CD8-positive, alpha-beta T cell (primary cell): ENCODE measurements at regions of chr17 and their contacts with region 1.

Region 1: GRCh38 chr17:6843241-6843880 is 11.8 kb upstream of the TEKT1 start:
- DNase-seq: peak in 2 of 9 experiments; percentile 56 to 69
- ATAC-seq: no peak
- H3K4me3 ChIP-seq: no peak overlapping the region
- H3K4me3 Mint-ChIP-seq: no peak overlapping the region
- H3K27ac ChIP-seq: no peak overlapping the region
- H3K27ac Mint-ChIP-seq: no peak overlapping the region
- H3K4me1 ChIP-seq: no peaks in the 10 kb centered on the region
- H3K4me1 Mint-ChIP-seq: peaks cover 3% of the 10 kb centered on the region
- H3K27me3 ChIP-seq: peaks cover 0 to 3% of the 10 kb centered on the region in 2 experiments
- H3K27me3 Mint-ChIP-seq: peaks cover 26% of the 10 kb centered on the region
- CTCF ChIP-seq: peak; percentile 66

Region 2: GRCh38 chr17:6666077-6666521 is 177.3 kb before region 1 on chr17:
- CTCF ChIA-PET with region 1: interaction called, 10 read pairs
- POLR2A ChIA-PET with region 1: no interaction called
- intact Hi-C with region 1: loop called in 1 of 2 experiments (anchors 1 kb)
- DNase-seq: peak in 6 of 9 experiments; percentile 16 to 69 (median 50)
- ATAC-seq: peak; percentile 65
- H3K4me3 ChIP-seq: no peak overlapping the region
- H3K4me3 Mint-ChIP-seq: no peak overlapping the region
- H3K27ac ChIP-seq: no peak overlapping the region
- H3K27ac Mint-ChIP-seq: no peak overlapping the region
- H3K4me1 ChIP-seq: no peaks in the 10 kb centered on the region
- H3K4me1 Mint-ChIP-seq: peaks cover 15% of the 10 kb centered on the region
- H3K27me3 ChIP-seq: peaks cover 0 to 2% of the 10 kb centered on the region in 2 experiments
- H3K27me3 Mint-ChIP-seq: no peaks in the 10 kb centered on the region
- CTCF ChIP-seq: peak; percentile 77

Region 3: DNA sequence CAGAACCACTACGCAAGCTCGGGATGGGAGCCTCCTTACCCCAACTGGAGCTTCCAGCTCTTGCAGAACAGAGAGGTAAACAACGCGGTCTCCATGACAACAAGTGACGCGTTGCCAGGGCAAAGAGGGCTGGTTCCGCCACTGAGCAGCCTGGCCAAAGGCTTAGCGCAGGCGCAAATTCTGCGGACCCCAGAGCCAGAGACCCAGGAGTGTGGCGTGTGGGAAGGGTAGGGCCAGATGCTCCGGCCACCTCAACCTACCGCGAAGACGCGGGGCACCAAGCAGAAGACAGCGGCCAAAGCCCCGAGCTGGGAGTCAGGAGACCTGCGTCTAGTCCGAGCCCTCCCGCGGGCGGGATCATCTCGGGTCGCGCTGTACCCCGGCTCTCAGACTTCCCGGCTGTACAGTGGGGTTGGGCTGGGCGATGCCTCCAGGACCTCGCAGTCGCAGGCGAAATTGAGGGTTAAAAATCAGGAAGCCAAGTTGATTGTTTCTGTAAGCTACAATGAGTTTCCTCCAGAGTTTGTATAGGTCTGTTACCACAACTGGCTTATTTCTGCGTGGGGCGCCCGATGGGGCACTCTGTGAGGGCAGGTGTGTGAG is 11.6 kb before region 1 on chr17 and contains the start of gene TEKT1:
- CTCF ChIA-PET with region 1: interaction called, 15 read pairs
- POLR2A ChIA-PET with region 1: no interaction called
- intact Hi-C with region 1: no loop called
- DNase-seq: peak; percentile 50 to 88 (median 74)
- ATAC-seq: peak; percentile 92
- H3K4me3 ChIP-seq: peak within 1 kb of the TSS; percentile 30 to 49
- H3K4me3 Mint-ChIP-seq: peak within 1 kb of the TSS; percentile 82
- H3K27ac ChIP-seq: peak within 1 kb of the TSS in 1 of 2 experiments; percentile 31
- H3K27ac Mint-ChIP-seq: no peak within 1 kb of the TSS
- H3K4me1 ChIP-seq: peaks cover 12% of the 10 kb centered on the region
- H3K4me1 Mint-ChIP-seq: peaks cover 9% of the 10 kb centered on the region
- H3K27me3 ChIP-seq: peaks cover 23 to 31% of the 10 kb centered on the region in 2 experiments
- H3K27me3 Mint-ChIP-seq: peaks cover 52% of the 10 kb centered on the region
- CTCF ChIP-seq: no peak
- total RNA-seq, gene TEKT1: not detected

Region 4: GRCh38 chr17:7004398-7005253 is 161.3 kb after region 1 on chr17:
- CTCF ChIA-PET with region 1: interaction called, 24 read pairs
- POLR2A ChIA-PET with region 1: no interaction called
- intact Hi-C with region 1: loop called (anchors 1 to 5 kb)
- DNase-seq: peak in 3 of 9 experiments; percentile 47 to 85 (median 77)
- ATAC-seq: peak; percentile 98
- H3K4me3 ChIP-seq: no peak overlapping the region
- H3K4me3 Mint-ChIP-seq: no peak overlapping the region
- H3K27ac ChIP-seq: no peak overlapping the region
- H3K27ac Mint-ChIP-seq: no peak overlapping the region
- H3K4me1 ChIP-seq: no peaks in the 10 kb centered on the region
- H3K4me1 Mint-ChIP-seq: peaks cover 23% of the 10 kb centered on the region
- H3K27me3 ChIP-seq: no peaks in the 10 kb centered on the region
- H3K27me3 Mint-ChIP-seq: no peaks in the 10 kb centered on the region
- CTCF ChIP-seq: peak; percentile 78

Region 5: GRCh38 chr17:7136266-7136877 is 293.0 kb after region 1 on chr17:
- CTCF ChIA-PET with region 1: interaction called, 3 read pairs
- POLR2A ChIA-PET with region 1: no interaction called
- intact Hi-C with region 1: loop called (anchors 5 to 10 kb)
- DNase-seq: peak; percentile 56 to 88 (median 82)
- ATAC-seq: no peak
- H3K4me3 ChIP-seq: no peak overlapping the region
- H3K4me3 Mint-ChIP-seq: no peak overlapping the region
- H3K27ac ChIP-seq: no peak overlapping the region
- H3K27ac Mint-ChIP-seq: no peak overlapping the region
- H3K4me1 ChIP-seq: peaks cover 6% of the 10 kb centered on the region
- H3K4me1 Mint-ChIP-seq: peaks cover 22% of the 10 kb centered on the region
- H3K27me3 ChIP-seq: no peaks in the 10 kb centered on the region
- H3K27me3 Mint-ChIP-seq: peaks cover 10% of the 10 kb centered on the region
- CTCF ChIP-seq: peak; percentile 99